B cell (primary cell): ENCODE measurements at regions of chr13 and their contacts with region 1.

Region 1: DNA sequence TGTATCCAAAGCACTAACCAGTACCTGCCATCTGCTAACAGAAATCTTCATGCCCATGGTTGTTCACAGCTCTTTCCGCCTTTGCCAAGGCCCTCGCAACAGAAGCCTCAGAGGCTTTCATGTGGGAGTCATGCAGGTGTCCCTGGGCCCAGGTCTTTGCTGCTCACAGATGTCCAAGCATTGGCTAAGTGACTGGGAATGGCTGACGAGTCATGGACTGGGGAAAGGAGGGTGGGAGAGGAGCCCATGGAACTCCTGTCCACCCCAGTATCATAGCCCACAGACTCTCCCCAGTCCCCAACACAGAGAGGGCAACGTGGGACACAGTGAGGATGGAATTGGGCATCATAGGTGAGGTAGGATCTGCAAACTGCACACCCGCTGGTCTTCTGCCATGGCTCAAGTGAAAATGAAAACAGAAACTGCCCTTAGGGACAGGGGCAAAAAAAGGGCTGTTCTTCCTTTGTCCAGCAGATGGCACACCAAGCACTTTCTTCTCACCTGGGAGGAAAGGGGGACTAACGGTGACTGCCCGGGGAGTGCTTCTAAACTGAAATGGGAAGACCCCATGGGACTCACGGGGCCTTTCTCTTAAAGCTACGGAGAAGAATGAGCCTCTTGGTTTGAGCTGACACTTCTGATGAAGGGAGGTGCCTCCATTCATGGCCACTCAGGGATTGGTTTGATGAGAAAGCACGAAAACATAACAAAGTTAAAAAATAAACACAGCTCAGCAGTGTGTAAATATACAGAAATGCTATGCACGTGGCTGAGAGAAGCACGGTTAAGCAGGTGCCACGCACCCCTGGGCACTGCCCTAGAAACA is 11.1 kb upstream of the DHRS12 start:
- DNase-seq: peak; percentile 89
- ATAC-seq: peak; percentile 89
- H3K4me3 ChIP-seq: peak overlapping the region in 3 of 5 experiments; percentile 19 to 30 (median 20)
- H3K4me3 Mint-ChIP-seq: peak overlapping the region; percentile 7
- H3K27ac ChIP-seq: no peak overlapping the region
- H3K27ac Mint-ChIP-seq: peak overlapping the region; percentile 73
- H3K4me1 ChIP-seq: peaks cover 22 to 25% of the 10 kb centered on the region in 2 donors
- H3K4me1 Mint-ChIP-seq: peaks cover 32% of the 10 kb centered on the region
- H3K27me3 ChIP-seq: no peaks in the 10 kb centered on the region
- H3K27me3 Mint-ChIP-seq: no peaks in the 10 kb centered on the region
- CTCF ChIP-seq: peak; percentile 88

Region 2: GRCh38 chr13:51797664-51798488 is 17.2 kb before region 1 on chr13:
- CTCF ChIA-PET with region 1: interaction called, 21 read pairs
- POLR2A ChIA-PET with region 1: interaction called, 3 read pairs
- intact Hi-C with region 1: no loop called
- DNase-seq: peak; percentile 76
- ATAC-seq: peak; percentile 60
- H3K4me3 ChIP-seq: no peak overlapping the region
- H3K4me3 Mint-ChIP-seq: no peak overlapping the region
- H3K27ac ChIP-seq: no peak overlapping the region
- H3K27ac Mint-ChIP-seq: peak overlapping the region; percentile 5
- H3K4me1 ChIP-seq: peaks cover 37 to 39% of the 10 kb centered on the region in 2 donors
- H3K4me1 Mint-ChIP-seq: peaks cover 45% of the 10 kb centered on the region
- H3K27me3 ChIP-seq: no peaks in the 10 kb centered on the region
- H3K27me3 Mint-ChIP-seq: no peaks in the 10 kb centered on the region
- CTCF ChIP-seq: peak; percentile 68

Region 3: GRCh38 chr13:51825165-51825592 is 10.1 kb after region 1 on chr13:
- CTCF ChIA-PET with region 1: interaction called, 66 read pairs
- POLR2A ChIA-PET with region 1: no interaction called
- intact Hi-C with region 1: no loop called
- DNase-seq: no peak
- ATAC-seq: no peak
- H3K4me3 ChIP-seq: peak overlapping the region in 1 of 5 experiments; percentile 1
- H3K4me3 Mint-ChIP-seq: peak overlapping the region; percentile 62
- H3K27ac ChIP-seq: peak overlapping the region in 1 of 2 donors; percentile 19
- H3K27ac Mint-ChIP-seq: peak overlapping the region; percentile 64
- H3K4me1 ChIP-seq: peaks cover 73 to 76% of the 10 kb centered on the region in 2 donors
- H3K4me1 Mint-ChIP-seq: peaks cover 79% of the 10 kb centered on the region
- H3K27me3 ChIP-seq: no peaks in the 10 kb centered on the region
- H3K27me3 Mint-ChIP-seq: peaks cover 4% of the 10 kb centered on the region
- CTCF ChIP-seq: no peak

Region 4: DNA sequence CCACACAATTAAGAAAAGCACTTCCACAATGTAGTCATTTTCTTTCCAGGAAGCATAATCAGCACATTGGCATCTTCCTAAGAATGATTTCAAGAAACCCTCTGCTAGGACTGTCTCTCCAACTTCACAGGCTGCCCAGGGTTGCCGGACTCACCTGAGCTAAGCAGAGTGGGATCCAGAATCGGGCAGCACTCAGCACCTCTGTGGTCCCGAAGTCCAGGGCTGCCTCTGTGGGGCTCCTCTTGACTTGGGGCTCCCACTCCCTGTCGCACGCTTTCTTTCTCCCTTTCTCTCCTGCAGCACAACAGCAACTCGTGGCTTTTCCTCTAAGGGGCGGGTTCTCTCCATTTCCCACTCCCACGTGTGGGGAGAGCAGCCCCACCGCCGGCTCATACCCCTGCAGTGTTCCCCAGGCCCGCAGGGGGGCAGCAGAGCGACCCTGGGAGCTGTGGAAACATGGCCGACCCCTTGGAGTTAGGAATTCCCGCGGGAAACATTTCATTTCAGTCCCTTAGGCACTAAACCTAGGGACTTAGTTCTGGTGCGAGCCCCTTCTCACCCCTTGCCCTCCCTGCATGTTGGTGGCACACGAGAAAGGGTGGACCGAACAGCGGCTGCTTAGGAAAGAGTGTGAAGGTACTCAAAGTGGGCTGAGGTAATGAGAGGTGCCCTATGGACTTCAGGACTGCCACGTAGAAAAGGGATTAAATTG is 30.0 kb after region 1 on chr13 and contains the start of gene TMEM272:
- CTCF ChIA-PET with region 1: interaction called, 18 read pairs
- POLR2A ChIA-PET with region 1: no interaction called
- intact Hi-C with region 1: no loop called
- DNase-seq: peak; percentile 56
- ATAC-seq: peak; percentile 71
- H3K4me3 ChIP-seq: no peak within 1 kb of the TSS
- H3K4me3 Mint-ChIP-seq: no peak within 1 kb of the TSS
- H3K27ac ChIP-seq: no peak within 1 kb of the TSS
- H3K27ac Mint-ChIP-seq: no peak within 1 kb of the TSS
- H3K4me1 ChIP-seq: peaks cover 0 to 6% of the 10 kb centered on the region in 2 donors
- H3K4me1 Mint-ChIP-seq: peaks cover 5% of the 10 kb centered on the region
- H3K27me3 ChIP-seq: peaks cover 0 to 8% (median 0%) of the 10 kb centered on the region in 4 experiments
- H3K27me3 Mint-ChIP-seq: peaks cover 16% of the 10 kb centered on the region
- CTCF ChIP-seq: peak; percentile 82
- total RNA-seq, gene TMEM272: not detected in 2 replicates